PC-9 (cell line): ENCODE measurements at regions of chr10 and their contacts with region 1.

Region 1: GRCh38 chr10:110610308-110610774 is 33.8 kb upstream of the RBM20 start:
- DNase-seq: peak; percentile 40 to 92
- H3K4me3 ChIP-seq: no peak overlapping the region
- H3K27ac ChIP-seq: no peak overlapping the region
- H3K4me1 ChIP-seq: 0 out of 2 replicates have a peak, but pooled peaks cover 6% of the 10 kb centered on the region
- H3K27me3 ChIP-seq: no peaks in the 10 kb centered on the region
- CTCF ChIP-seq: peak; percentile 79

Region 2: DNA sequence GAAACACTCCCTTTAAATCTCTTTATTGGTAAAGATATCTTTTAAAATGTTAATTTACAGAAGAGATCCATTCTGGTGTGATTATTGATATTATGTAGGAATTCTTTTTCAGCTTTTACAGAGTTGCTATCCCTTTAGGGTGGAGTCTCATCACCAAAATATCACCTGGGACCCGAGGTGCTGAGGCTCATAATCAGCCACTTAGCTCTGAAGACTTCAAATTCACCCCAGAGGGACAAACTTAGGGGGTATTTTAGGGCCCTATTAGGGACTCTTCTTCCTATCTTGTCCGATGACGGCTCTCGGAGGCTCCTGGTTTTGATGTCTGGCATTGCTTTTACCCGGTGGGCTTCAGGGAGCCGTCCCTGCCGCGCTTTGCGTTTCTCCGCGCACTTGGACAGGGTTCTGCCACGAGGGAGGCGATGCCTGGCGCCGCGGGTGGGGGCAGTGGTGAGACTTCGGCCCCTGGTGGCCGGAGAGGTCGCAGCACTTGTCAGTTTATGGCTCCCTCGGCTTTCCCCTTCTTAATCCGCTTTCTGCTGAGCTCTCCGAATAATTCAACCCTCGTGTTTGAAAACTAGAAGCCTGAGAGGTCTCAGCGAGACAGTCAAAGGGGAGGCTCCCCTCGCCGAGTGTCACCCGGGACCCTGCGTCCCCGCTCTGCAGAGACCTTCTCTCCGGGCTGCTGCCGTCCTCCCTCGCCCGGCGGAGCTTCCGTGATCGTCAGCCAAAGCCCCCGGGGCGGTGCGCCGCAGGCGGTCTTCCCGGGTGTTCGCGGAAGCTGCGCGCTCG is 61.6 kb after region 1 on chr10:
- CTCF ChIA-PET with region 1: interaction called, 3 read pairs
- POLR2A ChIA-PET with region 1: no interaction called
- intact Hi-C with region 1: loop called (anchors 2 kb)
- DNase-seq: peak; percentile 55 to 64
- H3K4me3 ChIP-seq: peak overlapping the region; percentile 75
- H3K27ac ChIP-seq: no peak overlapping the region
- H3K4me1 ChIP-seq: no peaks in the 10 kb centered on the region; the same call in 1 of the 2 replicates
- H3K27me3 ChIP-seq: no peaks in the 10 kb centered on the region
- CTCF ChIP-seq: peak; percentile 74

Region 3: DNA sequence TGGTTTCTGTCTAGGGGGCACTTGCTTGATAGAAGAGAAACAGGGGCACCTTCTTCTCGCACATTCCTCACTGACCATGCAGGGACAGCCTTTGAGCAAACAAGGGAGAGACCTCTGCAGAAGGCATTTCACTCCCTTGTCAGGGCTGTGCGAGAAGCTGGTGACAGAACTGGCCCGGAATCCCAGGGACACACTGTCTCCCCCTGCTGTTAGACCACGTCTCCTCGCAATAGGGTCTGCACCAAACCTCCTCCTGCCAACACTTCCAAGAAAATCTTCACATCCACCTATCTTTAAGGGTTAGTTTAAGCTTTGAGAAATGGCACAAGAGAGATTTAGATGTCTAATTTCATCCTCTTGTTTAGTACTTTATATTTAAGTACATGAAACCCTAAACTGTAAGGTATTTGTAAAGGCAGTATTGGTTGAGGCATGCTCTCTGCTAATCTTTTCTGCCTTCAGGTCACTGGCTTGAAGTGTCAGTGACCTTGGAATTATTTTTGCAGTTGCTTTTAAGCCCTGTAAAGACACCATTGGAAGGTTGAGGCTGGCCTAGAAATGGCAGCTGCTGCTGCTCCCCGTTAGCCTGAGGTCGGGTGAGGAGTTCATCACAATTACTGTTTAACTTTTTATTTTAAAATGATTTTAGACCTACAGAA is 70.8 kb after region 1 on chr10:
- CTCF ChIA-PET with region 1: no interaction called
- POLR2A ChIA-PET with region 1: no interaction called
- intact Hi-C with region 1: loop called (anchors 1 kb)
- DNase-seq: no peak
- H3K4me3 ChIP-seq: no peak overlapping the region
- H3K27ac ChIP-seq: no peak overlapping the region
- H3K4me1 ChIP-seq: no peaks in the 10 kb centered on the region
- H3K27me3 ChIP-seq: no peaks in the 10 kb centered on the region
- CTCF ChIP-seq: no peak; the same call in 1 of the 2 replicates

Region 4: DNA sequence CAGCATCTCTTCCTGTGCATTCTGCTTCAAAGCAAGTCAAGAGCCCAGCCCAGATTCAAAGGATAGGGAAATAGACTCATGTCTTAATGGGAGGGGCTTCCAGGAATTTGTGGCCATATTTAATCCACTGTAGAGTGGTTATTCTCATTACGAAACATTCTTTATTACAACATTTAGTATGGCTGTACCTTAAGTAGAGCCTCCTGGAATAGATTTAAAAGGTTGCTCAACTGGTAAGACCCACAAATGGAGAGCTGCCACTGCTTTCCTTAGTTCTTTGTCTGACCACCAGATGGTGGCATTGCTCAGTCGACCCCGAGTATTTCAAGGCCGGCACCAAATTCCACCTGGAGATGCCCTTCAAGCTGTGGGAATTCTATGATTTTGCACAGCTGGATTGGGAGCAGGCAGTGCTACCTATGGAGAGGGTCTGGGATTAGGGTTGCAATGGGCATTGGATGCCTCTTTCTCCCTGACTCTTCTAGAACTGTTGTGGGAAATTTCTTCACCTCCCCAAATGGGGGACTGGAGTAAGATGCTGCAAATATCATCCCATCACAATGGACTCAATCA is 136.0 kb after region 1 on chr10:
- CTCF ChIA-PET with region 1: no interaction called
- POLR2A ChIA-PET with region 1: no interaction called
- intact Hi-C with region 1: loop called (anchors 1 kb)
- DNase-seq: peak; percentile 58 to 68
- H3K4me3 ChIP-seq: no peak overlapping the region
- H3K27ac ChIP-seq: no peak overlapping the region
- H3K4me1 ChIP-seq: no peaks in the 10 kb centered on the region
- H3K27me3 ChIP-seq: no peaks in the 10 kb centered on the region
- CTCF ChIP-seq: peak; percentile 83

Region 5: DNA sequence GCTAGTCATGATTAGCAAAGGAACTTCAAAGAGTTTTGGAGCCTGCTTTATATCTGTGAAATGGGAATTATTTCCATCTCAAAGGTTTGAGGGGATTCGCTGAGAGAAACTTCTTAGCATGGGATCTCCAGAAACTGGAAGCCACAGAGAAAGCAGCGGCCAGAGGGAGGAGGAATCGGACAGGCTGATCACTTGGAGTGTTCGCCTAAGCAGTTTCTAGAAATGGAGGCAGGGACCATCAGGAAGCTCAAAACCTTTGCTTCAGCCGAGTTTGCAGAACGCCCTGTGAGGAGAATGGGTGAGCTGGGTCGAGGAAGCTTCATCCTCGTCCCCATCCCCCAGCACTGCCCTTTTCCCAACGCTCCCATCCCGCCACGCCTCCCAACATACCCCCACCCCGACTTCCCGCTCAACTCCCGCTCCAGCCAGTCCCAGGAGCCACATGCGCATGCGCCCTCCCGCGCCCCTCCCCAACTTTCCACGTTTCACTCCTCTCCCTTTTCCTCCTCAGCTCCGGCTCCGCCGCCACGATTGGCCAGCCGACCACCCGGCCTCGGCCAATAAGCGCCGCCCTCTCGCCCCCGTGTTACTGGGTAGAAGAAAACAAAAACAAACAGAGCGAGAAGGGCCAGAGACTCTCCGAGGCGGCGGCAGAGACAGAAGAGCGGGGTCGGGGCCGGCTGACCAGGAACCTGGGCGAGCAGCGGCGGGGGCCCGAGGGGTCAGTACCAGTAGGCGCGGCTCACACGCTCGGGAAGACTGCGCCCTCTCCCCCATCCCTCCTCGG is 261.1 kb after region 1 on chr10 and contains the start of gene PDCD4:
- CTCF ChIA-PET with region 1: interaction called, 10 read pairs
- POLR2A ChIA-PET with region 1: no interaction called
- intact Hi-C with region 1: no loop called
- DNase-seq: peak; percentile 82 to 95
- H3K4me3 ChIP-seq: peak within 1 kb of the TSS; percentile 80
- H3K27ac ChIP-seq: peak within 1 kb of the TSS; percentile 19; the same call in 1 of the 2 replicates
- H3K4me1 ChIP-seq: peaks cover 14% of the 10 kb centered on the region
- H3K27me3 ChIP-seq: no peaks in the 10 kb centered on the region
- CTCF ChIP-seq: no peak
- total RNA-seq, gene PDCD4: 92.4 and 96.4 TPM in 2 replicates

Region 6: GRCh38 chr10:110893559-110894179 is 283.3 kb after region 1 on chr10:
- CTCF ChIA-PET with region 1: no interaction called
- POLR2A ChIA-PET with region 1: no interaction called
- intact Hi-C with region 1: loop called (anchors 5 kb)
- DNase-seq: no peak
- H3K4me3 ChIP-seq: no peak overlapping the region
- H3K27ac ChIP-seq: no peak overlapping the region
- H3K4me1 ChIP-seq: no peaks in the 10 kb centered on the region
- H3K27me3 ChIP-seq: no peaks in the 10 kb centered on the region
- CTCF ChIP-seq: peak; percentile 65

Region 7: GRCh38 chr10:112140110-112140970 is 1530.0 kb after region 1 on chr10:
- CTCF ChIA-PET with region 1: no interaction called
- POLR2A ChIA-PET with region 1: no interaction called
- intact Hi-C with region 1: loop called (anchors 5 kb)
- DNase-seq: peak; percentile 69 to 71
- H3K4me3 ChIP-seq: no peak overlapping the region
- H3K27ac ChIP-seq: no peak overlapping the region
- H3K4me1 ChIP-seq: no peaks in the 10 kb centered on the region
- H3K27me3 ChIP-seq: no peaks in the 10 kb centered on the region
- CTCF ChIP-seq: peak; percentile 82